Endothelial cell of umbilical vein (primary cell): ENCODE measurements at regions of chr14 and their contacts with region 1.

Region 1: DNA sequence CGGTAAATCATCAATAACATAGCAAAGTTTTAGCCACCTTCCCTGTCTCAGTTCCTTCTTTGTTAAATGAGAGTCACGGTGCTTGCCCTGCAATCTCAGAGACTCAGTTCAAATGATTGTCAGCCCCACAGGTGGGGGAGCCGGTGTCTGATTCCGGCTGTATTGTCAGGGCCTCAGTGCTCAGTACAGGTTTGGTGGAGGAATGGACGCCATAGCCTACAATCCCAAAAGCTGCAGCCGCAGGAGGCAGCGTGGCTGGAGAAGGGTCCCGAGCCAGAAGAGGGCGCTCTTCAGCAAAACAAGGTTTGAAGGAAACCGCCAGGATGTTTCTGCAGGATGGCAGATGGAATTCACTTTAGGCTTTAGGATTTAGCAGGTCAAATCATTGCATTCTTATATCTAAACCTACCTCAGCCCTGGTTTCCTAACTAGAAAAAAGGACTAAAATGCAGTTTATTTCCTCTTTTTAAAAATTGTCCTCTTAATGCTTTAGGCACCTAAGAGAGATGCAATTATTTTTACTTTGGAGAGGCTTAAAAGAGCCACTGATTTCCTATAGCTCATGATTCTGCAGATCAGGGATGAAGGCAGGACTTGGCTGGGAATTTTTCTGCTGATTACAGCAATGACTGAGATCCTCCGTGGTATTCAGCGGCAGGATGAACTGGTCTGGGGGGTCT is 29.2 kb downstream of the FOS start:
- DNase-seq: peak; percentile 77
- H3K4me3 ChIP-seq: no peak overlapping the region
- H3K27ac ChIP-seq: no peak overlapping the region
- H3K4me1 ChIP-seq: peaks cover 3% of the 10 kb centered on the region
- H3K27me3 ChIP-seq: peaks cover 0 to 2% of the 10 kb centered on the region in 2 experiments
- CTCF ChIP-seq: peak; percentile 91 to 93
- POLR2A ChIP-seq: no peak

Region 2: GRCh38 chr14:74860906-74861733 is 446.7 kb before region 1 on chr14:
- CTCF ChIA-PET with region 1: interaction called, 7 read pairs
- POLR2A ChIA-PET with region 1: no interaction called
- dilution Hi-C with region 1: no loop called
- intact Hi-C with region 1: loop called (anchors 2 kb)
- DNase-seq: peak; percentile 83
- H3K4me3 ChIP-seq: no peak overlapping the region
- H3K27ac ChIP-seq: no peak overlapping the region
- H3K4me1 ChIP-seq: no peaks in the 10 kb centered on the region
- H3K27me3 ChIP-seq: no peaks in the 10 kb centered on the region
- CTCF ChIP-seq: peak; percentile 85 to 86
- POLR2A ChIP-seq: no peak

Region 3: DNA sequence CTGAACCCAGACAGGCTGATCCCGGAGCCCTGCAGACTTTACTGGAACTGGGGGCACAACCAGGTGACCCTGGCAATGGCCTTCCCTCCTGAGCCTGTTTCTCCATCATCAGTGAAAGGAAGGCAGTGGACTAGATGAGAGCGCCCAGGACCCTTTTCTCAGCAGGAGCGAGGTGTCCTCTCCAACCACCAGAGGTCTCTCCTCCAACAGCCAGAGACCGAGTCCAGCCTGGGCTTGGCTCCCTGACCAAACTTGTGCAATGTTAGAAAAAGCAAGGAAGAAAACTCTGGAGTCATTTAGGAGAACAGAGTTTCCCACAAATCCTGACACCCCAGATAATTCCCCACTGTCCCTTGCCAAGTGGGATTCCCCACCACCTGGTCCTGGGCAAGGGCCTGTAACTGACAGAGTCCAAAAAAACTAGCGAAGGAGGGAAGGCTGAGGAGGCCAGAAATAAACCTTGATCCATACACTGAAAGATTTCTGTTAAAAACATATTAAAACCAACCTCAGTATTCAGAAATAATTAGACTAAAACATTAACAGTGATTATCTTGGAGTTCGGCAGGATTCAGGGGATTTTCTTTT is 393.8 kb before region 1 on chr14:
- CTCF ChIA-PET with region 1: no interaction called
- POLR2A ChIA-PET with region 1: no interaction called
- dilution Hi-C with region 1: no loop called
- intact Hi-C with region 1: loop called (anchors 1 kb)
- DNase-seq: peak; percentile 66
- H3K4me3 ChIP-seq: no peak overlapping the region
- H3K27ac ChIP-seq: no peak overlapping the region
- H3K4me1 ChIP-seq: peaks cover 3% of the 10 kb centered on the region
- H3K27me3 ChIP-seq: no peaks in the 10 kb centered on the region
- CTCF ChIP-seq: peak; percentile 85 to 87
- POLR2A ChIP-seq: no peak

Region 4: DNA sequence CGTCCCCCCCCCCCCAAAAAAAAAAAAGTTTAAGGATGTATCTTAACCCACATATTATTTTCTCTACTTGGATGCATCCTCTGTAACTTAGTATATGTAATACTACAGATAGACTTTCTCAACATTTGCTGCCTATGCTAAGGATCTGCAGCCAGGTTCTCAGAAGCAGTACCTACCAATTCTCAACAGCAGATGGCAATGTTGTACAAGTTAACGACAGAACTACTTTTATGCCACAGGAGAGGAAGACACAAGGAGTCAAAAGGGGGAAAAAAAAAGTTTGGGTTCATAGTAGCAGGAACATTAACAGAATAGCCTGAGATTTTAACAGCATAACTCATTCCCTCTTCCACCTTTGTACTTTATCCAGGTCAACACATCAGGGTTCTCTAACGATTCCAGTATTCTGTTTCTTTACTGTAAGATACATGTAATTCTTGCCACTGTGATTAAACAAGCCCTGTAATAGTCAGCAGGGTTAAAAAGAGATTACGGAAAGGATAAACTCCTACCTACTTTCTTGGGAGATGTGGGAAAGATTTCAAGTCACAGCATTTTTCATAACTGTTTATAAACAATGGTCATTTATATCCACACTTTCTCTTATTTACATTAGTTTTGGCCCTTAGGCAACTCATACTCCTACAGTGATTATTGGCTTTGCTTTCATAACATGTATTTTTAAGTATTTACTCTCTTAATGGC is 175.3 kb before region 1 on chr14:
- CTCF ChIA-PET with region 1: interaction called, 175 read pairs
- POLR2A ChIA-PET with region 1: no interaction called
- dilution Hi-C with region 1: no loop called
- intact Hi-C with region 1: loop called (anchors 1 kb)
- DNase-seq: peak; percentile 81
- H3K4me3 ChIP-seq: no peak overlapping the region
- H3K27ac ChIP-seq: no peak overlapping the region
- H3K4me1 ChIP-seq: peaks cover 10% of the 10 kb centered on the region
- H3K27me3 ChIP-seq: no peaks in the 10 kb centered on the region
- CTCF ChIP-seq: peak; percentile 38 to 55
- POLR2A ChIP-seq: no peak

Region 5: DNA sequence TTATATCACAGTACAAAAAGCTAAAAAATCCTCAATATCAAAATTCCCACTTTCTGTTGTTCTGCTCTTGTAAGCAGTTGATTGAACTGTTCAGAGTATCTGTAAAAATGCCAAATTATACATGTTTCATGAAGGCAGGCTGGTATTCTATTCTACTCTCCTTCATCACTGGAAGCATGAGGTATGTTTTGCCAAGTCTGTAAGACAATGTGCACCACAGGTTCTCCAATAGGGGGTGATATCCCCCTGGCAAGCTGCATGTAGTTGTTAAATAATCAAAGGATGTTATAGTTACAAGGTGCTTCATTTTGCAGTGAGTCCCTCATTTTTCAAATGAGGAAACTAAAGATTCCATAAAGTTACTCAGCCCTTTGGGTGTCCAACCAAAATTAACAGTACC is 165.9 kb before region 1 on chr14:
- CTCF ChIA-PET with region 1: interaction called, 175 read pairs
- POLR2A ChIA-PET with region 1: no interaction called
- dilution Hi-C with region 1: no loop called
- intact Hi-C with region 1: no loop called
- DNase-seq: peak; percentile 67
- H3K4me3 ChIP-seq: no peak overlapping the region
- H3K27ac ChIP-seq: no peak overlapping the region
- H3K4me1 ChIP-seq: no peaks in the 10 kb centered on the region
- H3K27me3 ChIP-seq: no peaks in the 10 kb centered on the region
- CTCF ChIP-seq: peak; percentile 55 to 62
- POLR2A ChIP-seq: no peak

Region 6: DNA sequence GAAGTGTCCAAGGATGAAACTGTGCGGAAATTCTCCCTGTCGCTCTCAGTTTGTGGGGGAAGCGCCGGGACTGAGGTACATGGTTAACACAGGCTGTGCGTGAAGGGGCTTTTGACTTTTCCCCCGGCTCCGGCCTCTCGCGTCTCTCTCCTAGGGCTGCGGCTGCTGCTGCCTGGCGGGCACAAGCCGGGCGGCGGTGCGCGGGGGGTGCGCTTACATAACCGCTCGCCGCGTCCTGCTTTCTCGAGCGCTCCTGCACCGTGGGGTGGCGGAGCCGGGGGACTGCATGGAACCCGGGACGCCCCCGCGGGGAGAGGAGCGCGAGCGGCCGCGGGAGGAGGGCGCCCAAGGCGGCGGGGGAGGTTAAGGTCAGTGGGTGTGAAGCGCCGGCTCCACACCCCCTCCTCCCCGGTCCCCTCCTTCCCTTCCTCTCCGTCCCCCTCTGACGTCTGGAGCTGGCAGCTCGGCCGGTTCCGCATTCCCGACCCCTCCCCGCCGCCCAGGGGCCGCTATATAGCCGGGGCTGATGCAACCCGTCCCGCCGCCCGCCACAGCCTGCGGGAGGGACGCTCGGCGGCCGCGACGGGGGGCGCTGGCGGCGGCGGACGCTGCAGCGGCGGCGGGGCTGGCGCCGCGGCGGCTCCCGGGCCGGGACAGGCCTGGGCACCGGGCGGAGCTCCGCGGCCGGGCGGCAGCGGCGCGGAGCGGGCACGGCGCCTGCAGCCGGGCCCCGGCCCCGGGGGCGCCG is 119.8 kb after region 1 on chr14 and contains the start of gene JDP2:
- CTCF ChIA-PET with region 1: interaction called, 3 read pairs
- POLR2A ChIA-PET with region 1: no interaction called
- dilution Hi-C with region 1: no loop called
- intact Hi-C with region 1: loop called (anchors 5 kb)
- DNase-seq: peak; percentile 57
- H3K4me3 ChIP-seq: peak within 1 kb of the TSS; percentile 46 to 72 (median 52)
- H3K27ac ChIP-seq: no peak within 1 kb of the TSS
- H3K4me1 ChIP-seq: no peaks in the 10 kb centered on the region
- H3K27me3 ChIP-seq: peaks cover 15 to 22% of the 10 kb centered on the region in 2 experiments
- CTCF ChIP-seq: peak in 1 of 2 donors; percentile 0
- POLR2A ChIP-seq: peak; percentile 35
- total RNA-seq, gene JDP2: 10.6 and 10.8 TPM in 2 replicates

Region 7: GRCh38 chr14:75542588-75543091 is 234.8 kb after region 1 on chr14:
- CTCF ChIA-PET with region 1: no interaction called
- POLR2A ChIA-PET with region 1: no interaction called
- dilution Hi-C with region 1: no loop called
- intact Hi-C with region 1: no loop called
- DNase-seq: no peak
- H3K4me3 ChIP-seq: no peak overlapping the region
- H3K27ac ChIP-seq: no peak overlapping the region
- H3K4me1 ChIP-seq: no peaks in the 10 kb centered on the region
- H3K27me3 ChIP-seq: no peaks in the 10 kb centered on the region
- CTCF ChIP-seq: no peak
- POLR2A ChIP-seq: no peak

Region 8: GRCh38 chr14:75654127-75654732 is 346.4 kb after region 1 on chr14:
- CTCF ChIA-PET with region 1: interaction called, 9 read pairs
- POLR2A ChIA-PET with region 1: no interaction called
- dilution Hi-C with region 1: no loop called
- intact Hi-C with region 1: loop called (anchors 2 kb)
- DNase-seq: peak; percentile 77
- H3K4me3 ChIP-seq: no peak overlapping the region
- H3K27ac ChIP-seq: no peak overlapping the region
- H3K4me1 ChIP-seq: peaks cover 6% of the 10 kb centered on the region
- H3K27me3 ChIP-seq: no peaks in the 10 kb centered on the region
- CTCF ChIP-seq: peak; percentile 92 to 94
- POLR2A ChIP-seq: no peak